ENCODE measurements at regions of chr18 and their contacts with region 1.

Region 1: DNA sequence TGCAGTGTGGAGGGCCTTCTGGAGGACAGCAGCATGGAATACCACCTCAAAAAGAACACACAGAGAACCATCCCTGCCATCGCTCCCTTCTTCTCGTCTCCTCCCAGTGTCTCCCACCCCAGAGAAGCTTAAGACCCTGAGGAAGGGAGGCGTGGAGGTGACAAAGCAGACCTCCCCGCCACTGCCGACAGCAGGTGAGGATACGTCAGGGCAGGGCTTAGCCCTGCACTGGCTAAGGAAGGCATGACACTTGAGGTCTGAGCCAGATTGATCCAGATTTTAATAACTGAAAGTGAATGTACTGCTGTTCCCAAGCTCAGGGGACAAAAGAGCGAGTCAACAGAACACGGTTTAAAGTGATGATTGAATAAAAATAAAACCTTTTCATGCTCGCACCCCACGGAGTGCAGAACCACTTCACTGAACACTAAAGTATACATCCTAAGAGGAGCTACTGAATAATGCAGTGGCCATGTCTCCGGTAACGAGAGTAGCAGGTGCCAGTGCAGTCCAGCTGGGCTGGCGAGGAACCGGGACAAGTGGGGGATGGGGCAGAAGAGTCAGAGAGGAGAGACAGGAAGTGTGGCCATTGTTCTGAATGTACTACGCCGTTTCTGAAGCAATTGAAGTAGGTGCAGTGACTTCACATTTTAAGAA is 391.0 kb downstream of the CDH2 start:
- DNase-seq: no peak
- ATAC-seq: peak; percentile 52 to 62
- H3K4me3 ChIP-seq: no peak overlapping the region
- H3K27ac ChIP-seq: no peak overlapping the region
- H3K4me1 ChIP-seq: no peaks in the 10 kb centered on the region
- H3K27me3 ChIP-seq: no peaks in the 10 kb centered on the region
- CTCF ChIP-seq: no peak

Region 2: GRCh38 chr18:27723168-27723567 is 62.8 kb before region 1 on chr18:
- intact Hi-C with region 1: loop called (anchors 10 kb)
- DNase-seq: no peak
- ATAC-seq: no peak
- H3K4me3 ChIP-seq: no peak overlapping the region
- H3K27ac ChIP-seq: no peak overlapping the region
- H3K4me1 ChIP-seq: no peaks in the 10 kb centered on the region
- H3K27me3 ChIP-seq: no peaks in the 10 kb centered on the region
- CTCF ChIP-seq: no peak

Measured in lower lobe of right lung (tissue), 2 donors.